MCF 10A (cell line): ENCODE measurements at regions of chr17 and their contacts with region 1.

Region 1: GRCh38 chr17:75393523-75394331 is 11.8 kb downstream of the GRB2 start:
- DNase-seq: peak; percentile 97
- H3K4me3 Mint-ChIP-seq: peak overlapping the region; percentile 95
- H3K27ac Mint-ChIP-seq: peak overlapping the region; percentile 85
- H3K4me1 Mint-ChIP-seq: peaks cover 38% of the 10 kb centered on the region
- H3K27me3 Mint-ChIP-seq: no peaks in the 10 kb centered on the region
- CTCF ChIP-seq: no peak

Region 2: DNA sequence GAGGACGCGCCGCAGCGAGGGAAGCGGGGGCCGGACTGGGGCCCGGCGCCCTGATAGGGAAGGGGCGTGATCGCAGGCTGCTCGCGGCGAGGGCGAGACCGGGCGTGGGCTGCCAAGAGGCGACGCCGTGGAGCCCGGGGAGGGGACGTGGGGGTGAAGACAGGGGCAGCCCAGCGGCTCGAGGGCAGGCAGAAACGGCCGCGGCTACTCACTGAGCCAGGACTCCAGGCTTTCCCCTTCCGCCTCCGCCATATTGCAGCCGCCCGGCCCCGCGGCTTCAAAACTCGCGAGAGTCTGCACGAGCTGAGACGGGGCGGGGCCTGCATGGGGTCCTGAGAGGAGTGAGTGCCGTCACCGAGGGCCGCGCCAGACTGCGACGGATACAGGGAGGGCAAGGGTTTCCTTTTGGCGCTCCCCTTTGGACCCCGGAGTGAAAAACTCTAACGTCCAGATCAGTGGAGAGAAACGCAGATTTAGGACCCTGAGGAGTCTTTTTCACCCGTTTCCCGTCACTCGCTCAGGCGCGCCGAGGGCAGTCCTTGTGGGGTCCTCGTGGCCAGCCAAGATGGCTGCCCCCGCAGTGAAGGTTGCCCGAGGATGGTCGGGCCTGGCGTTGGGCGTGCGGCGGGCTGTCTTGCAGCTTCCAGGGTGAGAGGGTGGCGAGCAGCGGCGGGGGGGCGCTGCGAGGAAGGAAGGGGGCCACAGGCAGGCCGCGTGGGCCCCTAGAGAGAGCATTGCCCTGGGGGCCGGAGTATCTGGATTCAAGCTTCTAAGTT is 132.2 kb before region 1 on chr17 and contains the starts of genes GGA3 and MRPS7:
- CTCF ChIA-PET with region 1: no interaction called
- POLR2A ChIA-PET with region 1: interaction called, 49 read pairs
- intact Hi-C with region 1: no loop called
- DNase-seq: peak; percentile 94
- H3K4me3 Mint-ChIP-seq: peak within 1 kb of the TSS; percentile 100
- H3K27ac Mint-ChIP-seq: peak within 1 kb of the TSS; percentile 100
- H3K4me1 Mint-ChIP-seq: peaks cover 46% of the 10 kb centered on the region
- H3K27me3 Mint-ChIP-seq: no peaks in the 10 kb centered on the region
- CTCF ChIP-seq: no peak
- total RNA-seq, gene GGA3: 32.7 and 39.5 TPM in 2 replicates
- total RNA-seq, gene MRPS7: 73.9 and 75.0 TPM in 2 replicates

Region 3: DNA sequence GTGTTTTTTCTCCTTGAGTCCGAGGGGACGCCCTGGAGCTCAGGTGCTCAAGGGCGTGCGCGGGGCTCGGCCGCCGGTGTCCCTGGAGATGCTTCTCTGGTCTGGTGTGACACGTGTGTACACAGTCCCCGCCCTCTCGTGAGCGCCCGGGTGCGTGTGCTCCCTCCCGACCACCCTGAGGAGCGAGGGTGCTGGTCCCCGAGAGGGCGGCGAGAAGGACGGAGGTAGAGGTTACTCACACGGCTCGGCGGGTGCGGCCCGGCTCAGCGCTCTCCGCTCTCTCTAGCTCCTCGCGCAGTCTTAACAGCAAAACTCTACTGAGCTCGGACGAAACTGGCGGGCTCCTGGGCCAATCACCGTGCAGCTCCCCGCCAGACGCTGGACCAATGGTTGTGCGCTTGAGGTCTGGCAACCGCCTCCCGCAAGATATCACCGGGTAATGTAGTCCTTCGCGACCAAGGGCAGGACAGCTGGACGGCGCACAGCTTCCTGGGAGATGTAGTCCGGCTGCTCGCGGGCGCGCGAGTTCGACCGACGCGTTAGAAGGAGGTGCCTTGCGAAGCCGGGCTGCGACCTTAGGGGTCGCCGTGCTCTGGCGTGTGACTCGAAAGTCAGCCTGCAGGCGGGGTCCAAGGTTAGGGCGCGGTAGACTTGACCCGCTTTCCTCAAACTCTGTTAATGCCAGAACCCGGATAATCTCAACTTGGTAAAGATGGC is 104.5 kb before region 1 on chr17 and contains the start of gene SLC25A19:
- CTCF ChIA-PET with region 1: interaction called, 3 read pairs
- POLR2A ChIA-PET with region 1: interaction called, 42 read pairs
- intact Hi-C with region 1: no loop called
- DNase-seq: peak; percentile 98
- H3K4me3 Mint-ChIP-seq: peak within 1 kb of the TSS; percentile 98
- H3K27ac Mint-ChIP-seq: peak within 1 kb of the TSS; percentile 97
- H3K4me1 Mint-ChIP-seq: peaks cover 7% of the 10 kb centered on the region
- H3K27me3 Mint-ChIP-seq: no peaks in the 10 kb centered on the region
- CTCF ChIP-seq: no peak
- total RNA-seq, gene SLC25A19: 14.8 and 22.6 TPM in 2 replicates

Region 4: GRCh38 chr17:75325827-75326225 is 67.9 kb before region 1 on chr17:
- CTCF ChIA-PET with region 1: interaction called, 9 read pairs
- POLR2A ChIA-PET with region 1: interaction called, 15 read pairs
- intact Hi-C with region 1: no loop called
- DNase-seq: no peak
- H3K4me3 Mint-ChIP-seq: no peak overlapping the region
- H3K27ac Mint-ChIP-seq: no peak overlapping the region
- H3K4me1 Mint-ChIP-seq: no peaks in the 10 kb centered on the region
- H3K27me3 Mint-ChIP-seq: no peaks in the 10 kb centered on the region
- CTCF ChIP-seq: no peak

Region 5: DNA sequence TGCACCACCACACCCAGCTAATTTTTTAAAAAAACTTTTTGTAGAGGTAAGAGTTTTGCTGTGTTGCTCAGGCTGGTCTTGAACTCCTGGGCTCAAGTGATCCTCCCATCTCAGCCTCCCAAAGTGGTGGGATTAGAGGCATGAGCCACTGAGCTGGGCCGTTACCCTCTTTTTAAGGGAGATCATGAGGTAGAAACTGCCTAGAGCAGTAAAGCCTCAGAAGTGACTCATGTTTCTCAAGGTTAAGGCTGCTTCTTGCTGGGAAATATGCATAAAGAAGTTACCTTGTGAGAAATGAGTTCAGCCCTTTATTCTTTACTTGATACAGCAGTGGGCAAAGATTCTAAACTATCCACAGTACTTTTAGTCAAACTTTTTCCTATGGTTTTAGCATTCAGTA is 26.4 kb before region 1 on chr17:
- CTCF ChIA-PET with region 1: interaction called, 4 read pairs
- POLR2A ChIA-PET with region 1: interaction called, 14 read pairs
- intact Hi-C with region 1: no loop called
- DNase-seq: peak; percentile 44
- H3K4me3 Mint-ChIP-seq: no peak overlapping the region
- H3K27ac Mint-ChIP-seq: no peak overlapping the region
- H3K4me1 Mint-ChIP-seq: peaks cover 30% of the 10 kb centered on the region
- H3K27me3 Mint-ChIP-seq: no peaks in the 10 kb centered on the region
- CTCF ChIP-seq: no peak

Region 6: DNA sequence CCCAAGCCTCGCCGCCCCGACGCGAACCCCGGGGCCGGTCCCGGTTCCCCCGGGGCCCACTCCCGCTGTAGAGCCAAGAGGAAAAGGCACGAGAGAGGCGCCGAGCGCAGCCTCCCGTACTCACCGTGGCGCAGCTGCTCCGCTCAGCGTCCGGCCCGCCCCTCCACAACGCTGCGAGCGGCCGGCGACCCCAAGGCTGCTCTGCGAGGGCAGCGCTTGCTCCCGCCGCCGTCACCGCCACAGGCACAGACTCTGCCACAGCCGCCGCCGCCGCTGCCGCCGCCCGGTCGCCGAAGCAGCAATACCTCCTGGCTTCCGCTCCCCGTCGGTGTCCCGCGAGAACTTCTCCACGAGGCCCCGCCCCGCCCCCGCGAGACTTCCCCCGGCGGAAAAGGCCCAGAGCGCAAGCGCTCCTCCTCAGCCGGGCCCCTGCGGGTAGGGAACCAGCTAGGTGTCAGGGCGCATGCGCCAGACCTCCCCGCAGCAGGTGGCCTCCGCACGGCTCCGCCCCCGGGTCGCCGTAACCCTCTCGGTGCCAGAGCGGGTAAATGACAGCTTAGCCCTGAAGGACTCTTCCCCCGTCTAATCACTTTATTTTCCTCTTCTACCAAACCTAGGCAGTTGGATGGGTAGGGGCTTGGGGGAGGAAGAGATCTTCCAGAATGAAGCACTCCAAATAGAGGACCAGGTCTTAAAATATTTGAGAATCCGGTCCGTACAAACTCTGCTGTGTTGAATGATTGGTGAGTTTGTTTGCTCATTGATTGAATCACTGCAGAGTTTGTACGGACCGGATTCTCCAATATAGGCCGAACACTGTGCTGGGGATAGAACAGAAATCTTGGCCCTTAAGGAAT is 11.9 kb after region 1 on chr17 and contains the start of gene GRB2:
- CTCF ChIA-PET with region 1: interaction called, 6 read pairs
- POLR2A ChIA-PET with region 1: interaction called, 108 read pairs
- intact Hi-C with region 1: no loop called
- DNase-seq: peak; percentile 96
- H3K4me3 Mint-ChIP-seq: peak within 1 kb of the TSS; percentile 88
- H3K27ac Mint-ChIP-seq: peak within 1 kb of the TSS; percentile 80
- H3K4me1 Mint-ChIP-seq: peaks cover 11% of the 10 kb centered on the region
- H3K27me3 Mint-ChIP-seq: no peaks in the 10 kb centered on the region
- CTCF ChIP-seq: no peak
- total RNA-seq, gene GRB2: 67.1 and 74.6 TPM in 2 replicates

Region 7: DNA sequence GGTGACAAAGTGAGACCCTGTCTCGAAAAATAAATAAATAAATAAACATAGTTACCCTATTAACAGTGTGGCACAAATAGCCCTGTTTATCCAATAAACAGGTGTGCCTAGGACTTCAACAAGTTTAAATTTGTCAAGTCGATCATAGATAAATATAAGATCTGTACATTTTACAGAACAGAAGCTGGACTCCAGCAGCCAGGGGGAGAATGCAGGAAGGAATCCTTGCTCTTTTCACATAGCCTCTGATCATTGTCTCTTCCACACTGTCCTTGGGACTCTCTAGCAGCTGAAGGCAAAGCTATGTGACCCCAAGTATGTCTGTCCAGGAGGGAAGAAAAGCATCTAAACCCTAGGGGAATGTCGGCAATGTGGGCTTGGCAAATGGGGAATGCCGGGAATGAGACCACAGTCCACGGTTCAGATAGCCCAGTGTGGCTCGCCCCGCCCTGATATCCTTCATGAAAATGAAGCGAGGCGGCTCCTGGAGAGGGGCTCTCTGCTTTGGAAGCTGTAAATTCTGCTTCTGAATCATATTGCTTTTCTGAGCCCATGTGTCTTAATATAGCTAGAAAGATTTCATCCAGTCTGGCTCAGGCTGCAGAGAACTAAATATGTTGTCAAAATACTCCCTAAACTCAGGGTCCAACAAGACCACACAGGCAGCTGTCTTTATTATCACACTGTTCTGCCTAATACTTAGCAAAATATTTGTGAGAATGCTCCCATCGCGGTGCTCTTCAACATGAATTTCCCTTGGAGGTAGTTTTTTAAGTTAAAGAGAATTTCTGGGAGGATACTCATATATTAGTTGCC is 36.6 kb after region 1 on chr17:
- CTCF ChIA-PET with region 1: no interaction called
- POLR2A ChIA-PET with region 1: no interaction called
- intact Hi-C with region 1: no loop called
- DNase-seq: no peak
- H3K4me3 Mint-ChIP-seq: no peak overlapping the region
- H3K27ac Mint-ChIP-seq: no peak overlapping the region
- H3K4me1 Mint-ChIP-seq: peaks cover 5% of the 10 kb centered on the region
- H3K27me3 Mint-ChIP-seq: no peaks in the 10 kb centered on the region
- CTCF ChIP-seq: no peak

Region 8: GRCh38 chr17:75565068-75565467 is 171.3 kb after region 1 on chr17:
- CTCF ChIA-PET with region 1: no interaction called
- POLR2A ChIA-PET with region 1: no interaction called
- intact Hi-C with region 1: no loop called
- DNase-seq: peak; percentile 67
- H3K4me3 Mint-ChIP-seq: no peak overlapping the region
- H3K27ac Mint-ChIP-seq: no peak overlapping the region
- H3K4me1 Mint-ChIP-seq: no peaks in the 10 kb centered on the region
- H3K27me3 Mint-ChIP-seq: no peaks in the 10 kb centered on the region
- CTCF ChIP-seq: no peak